ENCODE measurements at regions of chr3 and their contacts with region 1.

Region 1: DNA sequence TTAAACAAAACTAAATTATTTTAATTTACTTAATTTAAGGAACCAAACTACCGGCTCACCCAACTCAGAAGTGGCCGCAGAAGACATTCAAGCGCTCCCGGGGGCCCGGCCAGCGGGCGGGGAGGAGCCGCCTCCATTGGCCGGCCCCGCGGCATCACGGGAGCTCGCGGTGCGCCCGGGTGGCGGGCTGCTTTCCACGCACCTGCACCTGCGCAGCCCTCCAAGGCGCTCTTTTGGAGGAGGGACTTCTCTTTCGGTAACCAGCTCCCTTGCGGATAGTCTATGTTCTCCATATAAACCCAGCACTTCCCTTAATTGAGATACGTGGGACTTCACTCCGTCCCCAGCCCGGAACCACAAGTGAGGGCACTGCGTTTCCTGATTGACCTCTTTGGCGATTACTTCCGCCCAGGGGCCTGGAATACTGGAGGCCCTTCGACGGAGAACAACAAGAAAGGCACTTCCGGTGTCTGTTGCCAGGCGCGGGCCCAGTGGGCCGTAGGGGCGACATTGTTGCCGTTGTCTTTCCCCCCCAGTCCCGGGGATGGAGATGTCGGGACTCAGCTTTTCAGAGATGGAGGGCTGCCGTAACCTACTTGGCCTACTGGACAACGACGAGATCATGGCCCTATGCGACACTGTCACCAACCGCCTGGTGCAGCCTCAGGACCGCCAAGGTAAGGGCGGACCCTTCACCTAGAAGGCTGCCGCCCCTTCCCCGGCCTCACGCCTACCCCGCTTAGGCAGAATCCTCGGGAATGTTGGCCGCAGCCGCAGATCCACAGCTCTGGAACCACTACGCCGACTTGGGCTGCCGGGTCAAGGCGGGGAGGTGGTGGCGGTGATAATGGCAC is at the start of gene C3orf38:
- DNase-seq: peak; percentile 78
- ATAC-seq: peak; percentile 87
- H3K4me3 Mint-ChIP-seq: peak within 1 kb of the TSS; percentile 94
- H3K27ac Mint-ChIP-seq: peak within 1 kb of the TSS; percentile 97
- H3K4me1 Mint-ChIP-seq: peaks cover 40% of the 10 kb centered on the region
- H3K27me3 Mint-ChIP-seq: no peaks in the 10 kb centered on the region
- CTCF ChIP-seq: no peak
- total RNA-seq, gene C3orf38: 36.5 and 40.3 TPM in 2 replicates

Region 2: DNA sequence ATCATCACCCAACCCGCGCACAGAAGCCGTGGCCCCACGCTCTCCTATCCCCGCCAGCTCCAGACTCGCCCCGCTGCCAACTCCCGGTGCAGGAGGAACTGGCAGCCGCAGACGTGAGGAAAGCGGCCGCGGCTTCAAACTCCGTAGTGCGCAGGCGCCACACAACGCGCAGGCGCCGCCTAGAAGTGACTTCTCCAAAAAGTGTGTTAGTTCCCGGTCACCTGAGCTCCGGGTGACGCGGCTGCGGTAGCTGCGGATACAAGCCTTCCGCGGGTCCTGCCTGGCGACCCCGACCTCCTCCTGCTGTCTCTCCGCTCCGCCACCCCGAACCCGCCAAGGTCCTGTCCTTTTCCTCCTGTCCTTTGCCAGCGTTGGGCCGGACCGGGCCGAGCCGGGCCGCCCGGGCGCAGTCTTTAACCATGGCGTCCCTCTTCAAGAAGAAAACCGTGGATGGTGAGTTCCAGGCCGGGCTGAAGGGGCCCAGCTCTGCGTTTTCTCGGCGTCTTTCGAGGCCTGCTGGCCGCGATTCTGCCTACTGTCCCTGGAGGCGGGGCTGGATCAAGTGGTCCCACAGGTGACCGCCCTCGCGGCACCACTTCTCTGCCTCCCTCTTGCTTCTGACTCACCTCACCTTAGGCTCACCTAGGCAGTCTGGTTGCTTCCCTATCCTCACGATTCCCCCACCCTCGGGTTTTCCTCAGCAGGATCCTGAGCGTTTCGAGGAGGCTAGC is 922.5 kb before region 1 on chr3 and contains the start of gene CHMP2B:
- CTCF ChIA-PET with region 1: no interaction called
- POLR2A ChIA-PET with region 1: interaction called, 13 read pairs
- intact Hi-C with region 1: loop called (anchors 1 kb)
- DNase-seq: peak; percentile 92
- ATAC-seq: peak; percentile 90
- H3K4me3 Mint-ChIP-seq: peak within 1 kb of the TSS; percentile 99
- H3K27ac Mint-ChIP-seq: peak within 1 kb of the TSS; percentile 97
- H3K4me1 Mint-ChIP-seq: peaks cover 49% of the 10 kb centered on the region
- H3K27me3 Mint-ChIP-seq: peaks cover 7% of the 10 kb centered on the region
- CTCF ChIP-seq: no peak
- total RNA-seq, gene CHMP2B: 21.7 and 26.8 TPM in 2 replicates

Region 3: DNA sequence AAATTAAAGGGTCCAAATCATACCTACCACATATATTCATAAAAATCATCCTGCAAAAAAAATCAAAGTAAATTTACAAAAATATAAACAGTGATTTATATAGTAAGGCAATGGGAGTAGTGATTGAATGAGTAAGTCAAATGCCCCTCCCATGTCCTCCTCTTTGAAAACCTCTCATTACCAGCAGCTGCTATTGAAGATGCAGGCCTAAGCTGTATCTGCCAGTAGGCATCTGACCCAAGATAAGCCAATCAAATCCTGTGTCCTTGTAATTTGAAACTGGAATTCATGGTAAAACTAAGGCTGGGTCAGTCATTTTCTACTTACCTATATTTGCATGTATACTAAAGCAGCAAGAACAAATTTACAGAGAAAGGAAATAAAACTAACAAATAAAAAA is 813.0 kb before region 1 on chr3:
- CTCF ChIA-PET with region 1: no interaction called
- POLR2A ChIA-PET with region 1: no interaction called
- intact Hi-C with region 1: no loop called
- DNase-seq: no peak
- ATAC-seq: no peak
- H3K4me3 Mint-ChIP-seq: no peak overlapping the region
- H3K27ac Mint-ChIP-seq: no peak overlapping the region
- H3K4me1 Mint-ChIP-seq: no peaks in the 10 kb centered on the region
- H3K27me3 Mint-ChIP-seq: no peaks in the 10 kb centered on the region
- CTCF ChIP-seq: no peak

Region 4: DNA sequence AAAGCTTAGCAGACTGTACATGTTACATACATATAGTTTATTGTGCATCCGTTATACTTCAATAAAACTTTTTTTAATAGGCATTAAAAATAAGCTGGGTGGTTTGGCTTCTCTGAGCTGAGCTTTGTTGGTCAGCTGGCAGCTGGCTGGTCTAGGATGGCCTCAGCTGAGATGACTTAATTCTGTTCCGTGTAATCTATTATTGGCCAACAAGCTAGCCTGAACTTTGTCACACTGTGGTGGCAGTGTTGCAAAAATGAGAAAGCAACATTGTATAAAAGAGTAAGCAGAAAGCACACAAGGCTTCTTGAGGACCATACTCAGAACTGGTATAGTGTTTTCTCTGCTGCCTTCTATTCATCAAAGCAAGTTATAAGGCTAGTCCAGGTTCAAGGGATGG is 136.1 kb before region 1 on chr3:
- CTCF ChIA-PET with region 1: no interaction called
- POLR2A ChIA-PET with region 1: no interaction called
- intact Hi-C with region 1: no loop called
- DNase-seq: no peak
- ATAC-seq: no peak
- H3K4me3 Mint-ChIP-seq: no peak overlapping the region
- H3K27ac Mint-ChIP-seq: no peak overlapping the region
- H3K4me1 Mint-ChIP-seq: peaks cover 8% of the 10 kb centered on the region
- H3K27me3 Mint-ChIP-seq: peaks cover 4% of the 10 kb centered on the region
- CTCF ChIP-seq: no peak

Region 5: DNA sequence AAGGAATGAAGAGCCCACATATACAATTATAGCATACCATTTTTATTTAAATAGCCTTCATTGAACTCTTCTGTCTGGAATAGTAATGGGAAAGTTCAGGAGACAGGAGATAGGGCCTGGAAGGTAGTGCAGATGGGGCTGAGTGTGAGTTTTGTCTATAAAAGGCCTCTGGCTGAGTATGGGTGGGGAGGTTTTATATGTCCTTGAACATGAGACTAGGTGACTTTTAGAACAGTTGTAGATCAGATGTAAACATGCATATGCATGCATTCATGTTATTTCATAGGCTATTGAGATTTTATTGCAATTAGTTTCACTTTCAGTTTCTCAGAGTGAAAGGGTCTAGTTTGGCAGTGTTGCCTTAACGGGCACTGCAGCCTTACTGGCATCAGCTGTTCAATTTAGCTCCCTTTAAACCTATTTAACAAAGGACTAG is 118.1 kb before region 1 on chr3:
- CTCF ChIA-PET with region 1: no interaction called
- POLR2A ChIA-PET with region 1: interaction called, 16 read pairs
- intact Hi-C with region 1: loop called (anchors 1 kb)
- DNase-seq: no peak
- ATAC-seq: peak; percentile 89
- H3K4me3 Mint-ChIP-seq: peak overlapping the region; percentile 84
- H3K27ac Mint-ChIP-seq: peak overlapping the region; percentile 81
- H3K4me1 Mint-ChIP-seq: peaks cover 41% of the 10 kb centered on the region
- H3K27me3 Mint-ChIP-seq: no peaks in the 10 kb centered on the region
- CTCF ChIP-seq: no peak

Region 6: DNA sequence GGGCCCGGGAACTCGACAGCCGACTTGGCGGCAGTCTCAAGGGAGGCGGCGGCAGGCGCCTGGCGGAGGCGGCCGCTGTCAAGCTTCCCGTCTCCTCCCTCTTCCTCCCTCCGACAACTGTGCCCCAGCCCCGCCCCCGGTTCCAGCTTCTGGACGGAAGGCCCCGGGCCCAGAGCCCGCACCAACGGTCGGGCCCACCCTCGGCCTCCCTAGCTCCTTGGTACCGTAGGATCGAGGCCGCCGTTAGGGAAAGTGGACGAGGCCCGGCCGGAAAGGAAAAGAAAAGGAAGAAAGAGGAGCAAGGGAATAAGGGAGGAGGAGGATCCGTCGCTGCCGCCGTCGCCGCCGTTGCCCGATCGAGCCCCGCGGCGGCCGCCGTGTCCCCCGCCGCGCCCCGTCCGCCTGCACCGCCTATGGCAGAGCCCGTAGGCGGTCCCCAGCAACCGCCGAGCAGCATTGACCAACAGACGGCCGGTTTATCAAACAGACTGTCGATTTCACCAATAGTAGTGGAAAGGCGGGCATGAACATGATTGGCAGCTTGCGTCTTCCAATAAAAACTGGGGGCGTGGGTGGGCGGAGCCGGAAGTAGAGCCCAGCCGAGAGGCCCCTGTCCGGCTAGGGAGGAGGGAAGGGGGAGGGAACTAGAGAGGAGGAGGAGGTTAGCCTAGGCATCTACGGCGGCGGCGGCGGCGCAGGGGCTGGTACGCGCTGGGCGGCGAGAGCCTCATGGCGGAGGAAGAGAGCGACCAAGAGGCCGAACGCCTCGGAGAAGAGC is 91.0 kb before region 1 on chr3 and contains the starts of genes CGGBP1 and ZNF654:
- CTCF ChIA-PET with region 1: no interaction called
- POLR2A ChIA-PET with region 1: interaction called, 81 read pairs
- intact Hi-C with region 1: loop called (anchors 1 kb)
- DNase-seq: peak; percentile 98
- ATAC-seq: peak; percentile 91
- H3K4me3 Mint-ChIP-seq: peak within 1 kb of the TSS; percentile 97
- H3K27ac Mint-ChIP-seq: peak within 1 kb of the TSS; percentile 97
- H3K4me1 Mint-ChIP-seq: peaks cover 58% of the 10 kb centered on the region
- H3K27me3 Mint-ChIP-seq: no peaks in the 10 kb centered on the region
- CTCF ChIP-seq: no peak
- total RNA-seq, gene CGGBP1: 84.6 and 90.8 TPM in 2 replicates
- total RNA-seq, gene ZNF654: 11.2 and 13.6 TPM in 2 replicates

Region 7: DNA sequence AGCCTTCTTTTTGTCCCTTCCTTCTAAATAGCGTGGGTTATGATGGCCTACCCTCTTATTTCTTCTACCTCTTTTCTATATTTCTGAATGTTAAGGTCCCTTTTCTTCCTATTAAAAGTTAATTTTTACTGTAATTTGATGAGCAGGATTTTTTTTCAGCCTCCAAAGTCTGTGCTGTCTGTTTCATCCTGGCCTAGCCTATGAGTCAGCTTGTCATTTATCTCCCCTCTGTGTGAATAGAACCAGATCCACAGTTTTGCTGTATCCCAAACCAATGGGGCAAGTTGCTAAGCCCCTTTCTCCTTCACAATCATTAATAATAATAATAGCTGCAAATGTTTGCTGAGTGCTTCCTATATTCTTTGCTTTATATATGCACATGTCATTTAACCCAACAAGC is 18.0 kb before region 1 on chr3:
- CTCF ChIA-PET with region 1: interaction called, 3 read pairs
- POLR2A ChIA-PET with region 1: no interaction called
- intact Hi-C with region 1: loop called (anchors 2 kb)
- DNase-seq: no peak
- ATAC-seq: no peak
- H3K4me3 Mint-ChIP-seq: no peak overlapping the region
- H3K27ac Mint-ChIP-seq: no peak overlapping the region
- H3K4me1 Mint-ChIP-seq: no peaks in the 10 kb centered on the region
- H3K27me3 Mint-ChIP-seq: no peaks in the 10 kb centered on the region
- CTCF ChIP-seq: no peak

Region 8: GRCh38 chr3:88180398-88180999 is 30.8 kb after region 1 on chr3:
- CTCF ChIA-PET with region 1: interaction called, 4 read pairs
- POLR2A ChIA-PET with region 1: no interaction called
- intact Hi-C with region 1: loop called (anchors 2 kb)
- DNase-seq: no peak
- ATAC-seq: no peak
- H3K4me3 Mint-ChIP-seq: no peak overlapping the region
- H3K27ac Mint-ChIP-seq: no peak overlapping the region
- H3K4me1 Mint-ChIP-seq: no peaks in the 10 kb centered on the region
- H3K27me3 Mint-ChIP-seq: no peaks in the 10 kb centered on the region
- CTCF ChIP-seq: no peak

Region 9: DNA sequence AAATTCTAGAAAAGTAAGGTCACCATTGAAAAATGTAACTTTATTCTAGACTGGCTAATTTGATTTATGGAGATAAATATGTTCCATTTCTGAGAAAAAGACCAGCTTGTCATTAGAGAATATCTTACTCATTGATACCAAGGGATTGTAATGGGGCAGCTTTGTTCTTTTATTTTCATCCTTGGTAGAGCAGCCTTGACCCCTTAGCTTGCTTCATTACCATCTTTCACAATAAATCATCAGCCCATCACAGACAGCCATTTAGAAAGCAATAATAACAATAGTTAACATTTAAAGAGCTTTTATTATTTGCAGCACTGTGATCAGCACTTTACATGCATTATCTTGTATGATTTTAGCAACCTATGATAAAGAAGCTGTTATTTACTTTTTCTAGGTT is 253.6 kb after region 1 on chr3:
- CTCF ChIA-PET with region 1: no interaction called
- POLR2A ChIA-PET with region 1: no interaction called
- intact Hi-C with region 1: no loop called
- DNase-seq: no peak
- ATAC-seq: no peak
- H3K4me3 Mint-ChIP-seq: no peak overlapping the region
- H3K27ac Mint-ChIP-seq: no peak overlapping the region
- H3K4me1 Mint-ChIP-seq: no peaks in the 10 kb centered on the region
- H3K27me3 Mint-ChIP-seq: no peaks in the 10 kb centered on the region
- CTCF ChIP-seq: no peak

Region 10: DNA sequence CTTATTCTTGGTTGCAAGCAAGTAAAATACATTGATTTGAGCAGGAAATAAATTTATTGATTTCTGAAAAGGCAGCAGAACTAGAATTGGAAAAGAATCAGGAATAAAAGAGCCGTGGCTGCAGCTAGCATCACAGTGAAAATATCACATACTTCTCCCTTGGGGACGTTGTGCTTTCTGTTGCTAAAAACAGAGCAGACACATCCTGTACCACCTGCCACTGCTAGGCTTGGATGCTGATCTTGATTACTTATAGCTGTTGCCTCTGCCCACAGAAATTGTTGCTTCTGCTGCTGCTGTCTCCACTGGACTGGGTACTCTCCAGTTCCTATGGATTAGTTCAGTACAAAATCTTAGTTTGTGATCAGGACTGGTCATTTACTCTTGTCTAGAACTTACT is 283.8 kb after region 1 on chr3:
- CTCF ChIA-PET with region 1: no interaction called
- POLR2A ChIA-PET with region 1: no interaction called
- intact Hi-C with region 1: loop called (anchors 5 kb)
- DNase-seq: no peak
- ATAC-seq: peak; percentile 95
- H3K4me3 Mint-ChIP-seq: peak overlapping the region; percentile 66
- H3K27ac Mint-ChIP-seq: peak overlapping the region; percentile 89
- H3K4me1 Mint-ChIP-seq: peaks cover 33% of the 10 kb centered on the region
- H3K27me3 Mint-ChIP-seq: no peaks in the 10 kb centered on the region
- CTCF ChIP-seq: no peak

Measured in activated B cell treated with CpG ODN at 0.5 μM for 24 hours (primary cell).